Activated CD4-positive, alpha-beta memory T cell treated with anti-CD3 and anti-CD28 coated beads for 36 hours (primary cell): ENCODE measurements at regions of chr2 and their contacts with region 1.

Region 1: DNA sequence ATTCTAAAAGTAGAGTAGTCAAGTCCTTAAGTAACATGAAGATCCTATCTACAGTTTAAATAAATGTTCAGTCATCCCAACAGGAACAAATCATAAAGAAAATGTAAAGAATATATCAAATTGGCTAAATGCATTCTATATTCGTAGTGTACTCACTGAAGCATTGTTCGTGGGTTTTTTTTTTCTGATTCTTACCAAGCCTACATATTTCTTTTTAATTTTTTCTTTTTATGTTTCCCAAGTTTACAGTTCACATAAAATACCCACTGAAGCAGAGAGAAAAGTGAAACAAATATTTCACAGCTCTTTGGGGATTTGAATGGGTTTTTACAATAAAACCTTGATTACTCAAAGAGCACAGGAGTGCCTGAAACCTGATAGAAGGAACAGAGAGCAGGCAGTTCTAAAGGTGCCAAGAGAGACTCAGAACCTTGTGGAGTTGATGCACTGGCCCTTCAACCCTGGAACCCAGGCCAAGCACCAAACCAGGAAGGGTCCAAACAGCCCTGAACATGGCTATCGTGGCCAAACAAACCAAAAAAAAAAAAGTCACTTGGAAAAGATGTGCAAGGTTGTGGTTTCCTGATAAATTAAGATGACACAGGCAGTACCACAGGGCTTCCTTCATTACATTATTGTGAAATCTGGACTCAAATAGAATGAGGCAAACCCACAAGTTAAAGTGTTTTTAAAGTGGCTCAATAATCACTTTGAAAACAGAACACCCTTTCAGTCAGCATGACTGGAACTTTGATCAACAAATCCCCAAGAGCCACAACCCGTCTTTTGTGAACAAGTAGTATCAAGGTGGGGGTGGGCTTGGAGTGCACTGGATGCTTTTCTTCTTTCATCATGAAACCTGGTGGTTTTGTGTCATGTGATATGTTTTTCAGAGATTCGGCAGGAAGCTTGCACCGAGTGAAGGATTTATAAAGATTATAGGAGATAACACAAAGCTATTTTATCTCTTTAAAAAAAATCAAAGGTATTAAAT is 245.0 kb upstream of the FN1 start:
- DNase-seq: peak; percentile 51
- H3K4me3 Mint-ChIP-seq: no peak overlapping the region
- H3K27ac Mint-ChIP-seq: peak overlapping the region; percentile 74
- H3K4me1 Mint-ChIP-seq: peaks cover 20% of the 10 kb centered on the region
- H3K27me3 Mint-ChIP-seq: no peaks in the 10 kb centered on the region

Region 2: DNA sequence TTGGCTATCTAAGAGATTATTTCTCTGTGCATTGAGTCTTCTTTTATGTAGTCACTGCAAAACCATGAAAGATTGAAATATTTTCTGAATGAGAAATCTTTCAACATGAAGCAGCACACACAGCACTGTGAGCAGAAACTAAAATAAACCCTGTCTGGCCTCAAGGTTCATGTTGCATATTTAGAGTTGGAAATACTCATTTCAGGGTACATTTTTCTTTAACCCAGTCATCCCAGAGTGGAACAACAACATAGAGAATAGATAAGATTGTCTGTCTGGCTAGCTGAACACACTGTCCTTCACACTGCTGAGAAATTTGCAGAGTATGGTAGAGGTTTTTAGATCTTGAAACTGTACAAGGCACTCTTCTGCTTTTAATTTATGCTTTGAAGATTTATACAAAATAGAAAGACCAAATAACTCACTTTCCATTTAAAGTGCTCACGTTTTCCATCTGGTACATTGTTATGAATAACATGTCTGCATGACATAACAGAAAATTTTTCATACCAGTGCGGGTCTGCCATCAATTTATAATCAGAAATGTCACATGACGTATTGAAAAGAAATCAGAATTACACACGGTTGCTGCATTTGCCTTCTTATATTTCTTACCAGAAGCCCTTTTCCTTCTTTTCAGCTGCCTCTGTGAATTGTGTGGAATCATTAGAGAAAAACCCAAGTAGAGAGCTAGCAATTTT is 220.1 kb before region 1 on chr2:
- CTCF ChIA-PET with region 1: no interaction called
- POLR2A ChIA-PET with region 1: no interaction called
- intact Hi-C with region 1: no loop called
- DNase-seq: no peak
- H3K4me3 Mint-ChIP-seq: no peak overlapping the region
- H3K27ac Mint-ChIP-seq: no peak overlapping the region
- H3K4me1 Mint-ChIP-seq: no peaks in the 10 kb centered on the region
- H3K27me3 Mint-ChIP-seq: peaks cover 4% of the 10 kb centered on the region

Region 3: DNA sequence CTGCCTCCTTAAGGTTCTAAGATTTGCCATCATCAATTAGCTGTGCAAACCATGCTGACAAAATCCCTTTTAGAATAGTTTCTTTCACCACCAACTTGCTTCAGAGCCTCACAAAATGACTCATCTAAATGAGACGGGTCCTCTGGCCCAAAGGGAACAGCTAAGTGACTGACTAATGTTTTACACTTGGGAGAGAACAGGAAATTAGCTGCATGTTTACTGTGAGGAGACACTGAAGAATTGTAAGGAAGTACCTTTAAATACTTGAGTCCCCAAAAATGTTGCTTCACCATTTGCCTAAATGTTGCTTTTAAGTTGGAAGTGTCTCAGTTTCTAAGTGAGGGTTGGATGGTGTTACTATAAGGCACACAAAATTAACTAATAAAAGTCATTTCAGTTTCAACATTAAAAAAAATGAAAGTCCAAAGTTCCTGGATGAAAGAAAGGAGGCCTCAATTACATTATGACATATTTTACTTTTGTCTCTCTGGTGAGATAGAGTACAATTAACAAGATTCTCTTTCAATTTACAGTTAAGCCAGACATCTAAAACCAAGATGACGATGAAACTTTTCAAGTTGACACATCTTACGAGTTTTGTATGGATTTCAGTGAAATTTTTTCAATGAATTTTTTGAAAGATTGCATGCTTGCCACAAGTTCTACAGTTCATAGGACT is 15.9 kb before region 1 on chr2:
- CTCF ChIA-PET with region 1: no interaction called
- POLR2A ChIA-PET with region 1: no interaction called
- intact Hi-C with region 1: loop called (anchors 1 kb)
- DNase-seq: no peak
- H3K4me3 Mint-ChIP-seq: no peak overlapping the region
- H3K27ac Mint-ChIP-seq: peak overlapping the region; percentile 54
- H3K4me1 Mint-ChIP-seq: peaks cover 15% of the 10 kb centered on the region
- H3K27me3 Mint-ChIP-seq: peaks cover 8% of the 10 kb centered on the region